Heart right ventricle (tissue), 16 donors: ENCODE measurements at regions of chr5 and their contacts with region 1.

Region 1: GRCh38 chr5:128201065-128201926 is 117.7 kb downstream of the SLC12A2 start:
- DNase-seq: peak; percentile 78 to 81
- ATAC-seq: peak; percentile 68 to 89 (median 82)
- H3K4me3 ChIP-seq: peak overlapping the region in 7 of 10 donors; percentile 2 to 38 (median 25)
- H3K27ac ChIP-seq: no peak overlapping the region
- H3K4me1 ChIP-seq: peaks cover 0 to 18% (median 8%) of the 10 kb centered on the region in 9 donors
- H3K27me3 ChIP-seq: peaks cover 0 to 5% (median 0%) of the 10 kb centered on the region in 7 donors
- CTCF ChIP-seq: peak; percentile 83 to 97 (median 89)

Region 2: GRCh38 chr5:127564002-127564769 is 637.1 kb before region 1 on chr5:
- intact Hi-C with region 1: loop called (anchors 1 to 5 kb)
- DNase-seq: peak in 1 of 2 donors; percentile 47
- ATAC-seq: peak in 5 of 8 donors; percentile 38 to 72 (median 64)
- H3K4me3 ChIP-seq: no peak overlapping the region
- H3K27ac ChIP-seq: no peak overlapping the region
- H3K4me1 ChIP-seq: peaks cover 0 to 5% (median 0%) of the 10 kb centered on the region in 9 donors
- H3K27me3 ChIP-seq: peaks cover 0 to 6% (median 0%) of the 10 kb centered on the region in 7 donors
- CTCF ChIP-seq: peak; percentile 23 to 79 (median 74)

Region 3: DNA sequence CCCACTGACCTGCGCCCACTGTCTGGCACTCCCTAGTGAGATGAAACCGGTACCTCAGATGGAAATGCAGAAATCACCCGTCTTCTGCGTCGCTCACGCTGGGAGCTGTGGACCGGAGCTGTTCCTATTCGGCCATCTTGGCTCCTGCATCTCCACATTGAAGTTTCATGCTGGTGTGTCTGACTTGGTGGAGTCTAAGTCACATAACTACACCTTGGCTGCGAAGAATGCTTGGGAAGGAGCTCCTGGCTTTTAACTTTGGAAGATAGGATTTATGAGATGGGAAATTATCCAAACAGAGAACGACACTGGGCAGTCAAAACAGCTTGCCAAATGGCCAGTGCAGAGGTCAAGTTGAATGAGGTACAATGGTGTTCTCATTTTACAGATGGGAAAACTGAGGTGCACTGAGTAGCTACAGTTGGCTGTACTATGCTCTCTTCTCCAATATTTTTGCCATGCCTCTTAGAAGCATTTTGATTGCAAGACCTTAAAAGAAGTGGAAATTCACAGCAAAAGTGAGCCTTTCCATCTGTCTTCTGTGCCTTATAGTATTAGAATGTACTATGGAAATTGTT is 461.4 kb before region 1 on chr5:
- intact Hi-C with region 1: loop called in 2 of 10 experiments (anchors 5 kb)
- DNase-seq: no peak
- ATAC-seq: no peak
- H3K4me3 ChIP-seq: no peak overlapping the region
- H3K27ac ChIP-seq: no peak overlapping the region
- H3K4me1 ChIP-seq: no peaks in the 10 kb centered on the region
- H3K27me3 ChIP-seq: no peaks in the 10 kb centered on the region
- CTCF ChIP-seq: no peak

Region 4: DNA sequence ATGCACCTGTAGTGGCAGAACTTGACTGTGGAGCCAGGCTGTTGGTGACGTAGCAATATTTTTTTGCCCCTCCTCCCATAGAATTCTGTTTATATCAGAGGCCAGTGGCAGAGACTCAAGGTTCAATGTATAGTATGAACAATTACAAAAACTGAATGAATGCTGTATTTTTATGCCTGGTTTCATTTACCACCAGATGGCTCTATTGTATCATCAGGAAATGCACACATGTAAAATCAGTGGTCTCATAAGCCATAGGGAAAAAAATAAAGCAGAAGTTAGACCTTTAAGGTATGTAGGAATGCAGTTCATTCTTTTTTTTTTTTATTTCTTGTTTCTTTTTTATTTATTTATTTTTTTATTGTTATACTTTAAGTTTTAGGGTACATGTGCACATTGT is 454.5 kb before region 1 on chr5:
- intact Hi-C with region 1: loop called in 6 of 10 experiments (anchors 1 to 10 kb)
- DNase-seq: no peak
- ATAC-seq: no peak
- H3K4me3 ChIP-seq: no peak overlapping the region
- H3K27ac ChIP-seq: no peak overlapping the region
- H3K4me1 ChIP-seq: no peaks in the 10 kb centered on the region
- H3K27me3 ChIP-seq: no peaks in the 10 kb centered on the region
- CTCF ChIP-seq: peak in 8 of 9 donors; percentile 33 to 67 (median 54)

Region 5: DNA sequence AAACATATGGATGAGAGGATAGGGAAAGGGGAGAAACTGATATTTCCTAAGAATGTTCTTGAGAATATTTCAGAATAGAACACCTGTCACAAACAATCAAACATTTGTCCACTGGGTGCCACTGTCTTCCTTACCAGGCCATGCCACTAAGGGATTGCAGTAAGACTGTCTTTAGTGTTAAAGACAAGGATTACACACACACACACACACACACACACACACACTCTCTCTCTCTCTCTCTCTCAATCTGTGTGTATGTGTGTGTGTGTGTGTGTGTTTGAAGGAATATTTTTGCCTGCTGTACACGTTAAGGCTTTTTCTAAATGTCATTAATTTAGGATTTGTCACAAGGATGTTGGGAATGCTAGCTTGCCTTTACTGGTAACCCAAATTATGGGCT is 443.7 kb before region 1 on chr5:
- intact Hi-C with region 1: loop called in 8 of 10 experiments (anchors 1 to 10 kb)
- DNase-seq: peak in 1 of 2 donors; percentile 40
- ATAC-seq: peak in 7 of 8 donors; percentile 44 to 84 (median 69)
- H3K4me3 ChIP-seq: no peak overlapping the region
- H3K27ac ChIP-seq: no peak overlapping the region
- H3K4me1 ChIP-seq: peaks cover 0 to 11% (median 6%) of the 10 kb centered on the region in 9 donors
- H3K27me3 ChIP-seq: no peaks in the 10 kb centered on the region
- CTCF ChIP-seq: peak in 8 of 9 donors; percentile 22 to 67 (median 55)

Region 6: DNA sequence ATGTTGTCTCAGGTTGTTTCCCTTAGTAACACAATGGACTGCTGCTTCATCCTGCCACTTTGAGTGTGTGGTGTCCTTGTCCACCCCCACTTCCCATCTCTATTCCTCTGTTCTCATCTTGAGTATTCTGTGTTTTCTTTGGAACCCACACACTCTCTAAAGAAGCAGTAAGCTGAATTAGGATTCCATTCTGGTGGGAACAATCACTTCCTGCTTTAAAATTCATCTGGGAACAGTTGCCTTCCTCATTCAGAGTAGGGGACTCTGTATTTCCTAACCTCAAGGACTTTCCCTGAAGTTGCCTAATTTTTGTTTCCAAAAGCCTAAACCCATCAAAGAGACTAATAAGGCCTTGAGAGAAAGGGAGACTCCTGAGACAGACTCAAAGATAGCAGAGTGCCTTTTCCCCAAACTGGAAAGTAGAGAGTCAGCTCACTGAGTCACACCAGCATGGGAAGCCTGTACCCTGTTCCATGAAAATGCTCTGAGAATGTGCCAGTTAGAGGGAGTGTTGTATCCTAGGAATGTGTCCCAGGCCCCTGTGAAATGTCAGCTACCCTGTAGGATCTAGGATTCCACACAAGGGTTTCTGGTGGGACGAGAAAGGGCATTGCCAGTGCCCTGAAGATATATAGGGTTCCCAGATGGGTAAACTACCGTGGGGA is 434.5 kb before region 1 on chr5:
- intact Hi-C with region 1: loop called in 1 of 10 experiments (anchors 10 kb)
- DNase-seq: no peak
- ATAC-seq: peak in 4 of 8 donors; percentile 11 to 62 (median 44)
- H3K4me3 ChIP-seq: no peak overlapping the region
- H3K27ac ChIP-seq: peak overlapping the region in 5 of 10 donors; percentile 3 to 57 (median 9)
- H3K4me1 ChIP-seq: peaks cover 0 to 31% (median 14%) of the 10 kb centered on the region in 9 donors
- H3K27me3 ChIP-seq: no peaks in the 10 kb centered on the region
- CTCF ChIP-seq: no peak

Region 7: GRCh38 chr5:127875235-127876021 is 325.9 kb before region 1 on chr5:
- intact Hi-C with region 1: loop called in 5 of 10 experiments (anchors 5 to 10 kb)
- DNase-seq: peak; percentile 24 to 53
- ATAC-seq: peak; percentile 72 to 96 (median 88)
- H3K4me3 ChIP-seq: no peak overlapping the region
- H3K27ac ChIP-seq: peak overlapping the region; percentile 22 to 74 (median 67)
- H3K4me1 ChIP-seq: peaks cover 2 to 61% (median 37%) of the 10 kb centered on the region in 9 donors
- H3K27me3 ChIP-seq: no peaks in the 10 kb centered on the region
- CTCF ChIP-seq: peak in 8 of 9 donors; percentile 7 to 59 (median 38)

Region 8: GRCh38 chr5:128358826-128359225 is 157.5 kb after region 1 on chr5:
- intact Hi-C with region 1: no loop called
- DNase-seq: no peak
- ATAC-seq: no peak
- H3K4me3 ChIP-seq: no peak overlapping the region
- H3K27ac ChIP-seq: no peak overlapping the region
- H3K4me1 ChIP-seq: peaks cover 0 to 7% (median 0%) of the 10 kb centered on the region in 9 donors
- H3K27me3 ChIP-seq: no peaks in the 10 kb centered on the region
- CTCF ChIP-seq: no peak